Endothelial cell of umbilical vein (primary cell): ENCODE measurements at regions of chr7 and their contacts with region 1.

Region 1: GRCh38 chr7:30301751-30302150 is 17.4 kb downstream of the ZNRF2 start:
- DNase-seq: no peak
- H3K4me3 ChIP-seq: no peak overlapping the region
- H3K27ac ChIP-seq: no peak overlapping the region
- H3K4me1 ChIP-seq: no peaks in the 10 kb centered on the region
- H3K27me3 ChIP-seq: no peaks in the 10 kb centered on the region
- CTCF ChIP-seq: no peak
- POLR2A ChIP-seq: no peak

Region 2: GRCh38 chr7:30312178-30312577 is 10.4 kb after region 1 on chr7:
- CTCF ChIA-PET with region 1: interaction called, 10 read pairs
- POLR2A ChIA-PET with region 1: no interaction called
- dilution Hi-C with region 1: no loop called
- intact Hi-C with region 1: no loop called
- DNase-seq: no peak
- H3K4me3 ChIP-seq: no peak overlapping the region
- H3K27ac ChIP-seq: no peak overlapping the region
- H3K4me1 ChIP-seq: no peaks in the 10 kb centered on the region
- H3K27me3 ChIP-seq: no peaks in the 10 kb centered on the region
- CTCF ChIP-seq: no peak
- POLR2A ChIP-seq: no peak

Region 3: GRCh38 chr7:30572212-30572841 is 270.6 kb after region 1 on chr7:
- CTCF ChIA-PET with region 1: no interaction called
- POLR2A ChIA-PET with region 1: no interaction called
- dilution Hi-C with region 1: no loop called
- intact Hi-C with region 1: no loop called
- DNase-seq: no peak
- H3K4me3 ChIP-seq: no peak overlapping the region
- H3K27ac ChIP-seq: no peak overlapping the region
- H3K4me1 ChIP-seq: no peaks in the 10 kb centered on the region
- H3K27me3 ChIP-seq: no peaks in the 10 kb centered on the region
- CTCF ChIP-seq: no peak
- POLR2A ChIP-seq: no peak